Activated CD4-positive, alpha-beta T cell treated with anti-CD3 and anti-CD28 coated beads, Interleukin-2, amount 10 ng/mL, durations not matched to agents 7 days and 5 days (primary cell): ENCODE measurements at regions of chr14 and their contacts with region 1.

Region 1: DNA sequence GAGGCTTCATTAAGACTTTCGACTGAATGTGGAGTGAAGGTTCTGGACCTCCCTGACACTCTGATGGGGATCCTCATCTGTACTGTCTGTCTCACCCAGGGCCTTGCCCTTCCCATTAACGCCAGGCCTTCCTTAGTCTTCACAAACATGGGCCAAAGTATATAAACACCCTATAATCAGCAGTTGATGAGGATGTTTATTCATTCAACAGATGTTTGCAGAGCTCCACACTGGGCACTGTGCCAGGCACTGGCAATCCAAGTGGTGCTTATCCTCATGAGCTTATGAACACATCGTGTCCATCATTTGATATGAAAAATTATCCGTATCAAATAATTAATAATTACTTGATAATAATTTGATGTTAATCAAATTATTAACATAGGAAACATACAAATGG is 454.4 kb downstream of the FUT8 start:
- DNase-seq: no peak
- H3K4me3 Mint-ChIP-seq: no peak overlapping the region
- H3K27ac Mint-ChIP-seq: no peak overlapping the region
- H3K4me1 Mint-ChIP-seq: peaks cover 50% of the 10 kb centered on the region
- H3K27me3 Mint-ChIP-seq: no peaks in the 10 kb centered on the region

Region 2: DNA sequence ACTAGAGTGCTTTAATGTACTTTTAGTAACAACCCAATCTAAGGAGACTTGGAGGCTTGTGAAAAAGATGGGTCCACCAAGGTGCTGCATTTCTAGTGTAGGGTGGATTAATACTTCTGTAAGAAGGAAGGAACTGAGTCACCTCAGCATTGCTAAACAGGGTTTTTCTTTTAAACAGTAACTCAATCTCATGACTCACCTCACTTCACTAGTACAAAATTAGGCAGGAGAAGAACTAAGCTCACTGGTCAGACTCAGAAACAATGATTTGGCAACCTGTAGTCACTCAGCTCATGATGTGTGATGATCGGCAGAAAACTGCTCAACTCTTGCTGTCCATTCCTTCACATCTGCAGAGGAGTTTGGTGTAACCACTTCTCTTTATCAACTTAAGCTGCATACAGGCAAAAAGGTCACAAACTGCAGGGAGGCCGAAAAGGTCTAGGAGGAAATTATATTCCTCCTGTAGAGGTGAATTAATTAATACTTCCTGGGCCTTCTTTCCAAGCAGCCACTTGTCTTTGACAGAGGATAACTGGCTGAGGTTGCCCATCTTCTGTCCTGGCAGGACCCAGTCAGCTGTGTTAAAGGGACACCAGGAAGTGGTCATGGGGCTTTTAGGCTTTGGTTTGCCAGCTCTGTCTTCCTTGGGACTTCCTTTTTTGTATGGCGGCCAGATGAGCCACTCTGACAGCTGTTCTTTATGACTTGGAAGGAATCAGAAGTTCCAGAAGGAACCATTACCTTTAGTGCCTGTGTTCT is 12.5 kb after region 1 on chr14:
- CTCF ChIA-PET with region 1: interaction called, 22 read pairs
- POLR2A ChIA-PET with region 1: no interaction called
- DNase-seq: no peak
- H3K4me3 Mint-ChIP-seq: no peak overlapping the region
- H3K27ac Mint-ChIP-seq: peak overlapping the region; percentile 83
- H3K4me1 Mint-ChIP-seq: peaks cover 3% of the 10 kb centered on the region
- H3K27me3 Mint-ChIP-seq: no peaks in the 10 kb centered on the region